ENCODE measurements at regions of chr2 and their contacts with region 1.

Region 1: GRCh38 chr2:203376173-203376572 is 48.0 kb downstream of the ABI2 start:
- DNase-seq: no peak
- ATAC-seq: no peak
- H3K4me3 ChIP-seq: no peak overlapping the region
- H3K27ac ChIP-seq: no peak overlapping the region
- H3K4me1 ChIP-seq: no peaks in the 10 kb centered on the region
- H3K27me3 ChIP-seq: no peaks in the 10 kb centered on the region
- CTCF ChIP-seq: no peak
- POLR2A ChIP-seq: no peak
- RAD21 ChIP-seq: no peak

Region 2: DNA sequence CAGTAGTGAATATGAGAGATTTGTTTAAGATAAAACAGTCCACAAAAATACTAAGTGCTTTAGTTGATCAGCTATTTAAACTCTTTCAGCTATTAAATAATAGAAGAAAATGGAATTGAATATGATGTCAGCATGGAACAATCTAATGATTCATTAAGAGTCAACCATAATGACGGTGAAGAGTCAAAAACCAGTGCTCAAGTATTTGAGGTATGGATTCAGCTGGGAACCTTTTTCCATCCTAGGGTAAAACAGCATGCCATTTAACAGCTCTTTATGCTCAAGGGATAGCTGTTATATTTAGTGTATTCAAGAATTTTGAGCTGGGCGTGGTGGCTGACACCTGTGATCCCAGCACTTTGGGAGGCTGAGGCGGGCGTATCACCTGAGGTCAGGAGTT is 434.4 kb before region 1 on chr2:
- CTCF ChIA-PET with region 1: no interaction called
- POLR2A ChIA-PET with region 1: no interaction called
- dilution Hi-C with region 1: no loop called
- in situ Hi-C with region 1: no loop called
- intact Hi-C with region 1: no loop called
- DNase-seq: peak; percentile 83
- ATAC-seq: peak; percentile 56
- H3K4me3 ChIP-seq: no peak overlapping the region
- H3K27ac ChIP-seq: no peak overlapping the region
- H3K4me1 ChIP-seq: no peaks in the 10 kb centered on the region; the same call in 1 of the 2 replicates
- H3K27me3 ChIP-seq: no peaks in the 10 kb centered on the region
- CTCF ChIP-seq: no peak
- POLR2A ChIP-seq: no peak
- RAD21 ChIP-seq: no peak

Region 3: DNA sequence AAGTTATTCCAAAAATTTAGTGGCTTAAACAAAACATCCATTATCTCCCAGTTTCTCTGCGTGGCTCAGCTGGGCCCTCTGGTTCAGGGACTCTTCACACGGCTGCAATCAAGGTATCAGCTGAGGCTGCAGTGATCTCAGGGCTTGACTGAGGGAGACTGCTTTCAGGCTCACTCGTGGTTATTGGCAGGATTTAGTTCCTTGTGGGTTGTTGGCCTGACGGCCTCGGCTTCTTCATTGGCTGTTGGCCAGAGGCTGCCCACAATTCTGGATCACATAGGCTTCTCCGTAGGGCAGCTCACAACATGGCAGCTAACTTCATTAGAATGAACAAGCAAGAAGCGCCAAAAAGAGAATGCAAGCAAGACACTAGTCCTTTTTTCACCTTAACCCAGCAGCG is 42.1 kb after region 1 on chr2:
- CTCF ChIA-PET with region 1: interaction called, 3 read pairs
- POLR2A ChIA-PET with region 1: interaction called, 19 read pairs
- dilution Hi-C with region 1: no loop called
- in situ Hi-C with region 1: no loop called
- intact Hi-C with region 1: no loop called
- DNase-seq: no peak
- ATAC-seq: no peak
- H3K4me3 ChIP-seq: no peak overlapping the region
- H3K27ac ChIP-seq: no peak overlapping the region
- H3K4me1 ChIP-seq: no peaks in the 10 kb centered on the region
- H3K27me3 ChIP-seq: no peaks in the 10 kb centered on the region
- CTCF ChIP-seq: no peak
- POLR2A ChIP-seq: no peak
- RAD21 ChIP-seq: no peak

Region 4: GRCh38 chr2:204282525-204282924 is 906.4 kb after region 1 on chr2:
- CTCF ChIA-PET with region 1: no interaction called
- POLR2A ChIA-PET with region 1: no interaction called
- dilution Hi-C with region 1: no loop called
- in situ Hi-C with region 1: no loop called
- intact Hi-C with region 1: no loop called
- DNase-seq: no peak
- ATAC-seq: no peak
- H3K4me3 ChIP-seq: no peak overlapping the region
- H3K27ac ChIP-seq: no peak overlapping the region
- H3K4me1 ChIP-seq: no peaks in the 10 kb centered on the region
- H3K27me3 ChIP-seq: peaks cover 33% of the 10 kb centered on the region
- CTCF ChIP-seq: no peak
- POLR2A ChIP-seq: no peak
- RAD21 ChIP-seq: no peak

Measured in IMR-90 (cell line).